ENCODE measurements at regions of chr4 and their contacts with region 1.

Region 1: GRCh38 chr4:169810325-169811323 is 52.9 kb upstream of the HPF1 start:
- DNase-seq: peak in 4 of 5 donors; percentile 46 to 56 (median 50)
- H3K4me3 ChIP-seq: no peak overlapping the region
- H3K4me3 Mint-ChIP-seq: no peak overlapping the region
- H3K27ac ChIP-seq: no peak overlapping the region
- H3K27ac Mint-ChIP-seq: no peak overlapping the region
- H3K4me1 ChIP-seq: no peaks in the 10 kb centered on the region
- H3K4me1 Mint-ChIP-seq: no peaks in the 10 kb centered on the region
- H3K27me3 ChIP-seq: no peaks in the 10 kb centered on the region
- H3K27me3 Mint-ChIP-seq: peaks cover 4 to 9% of the 10 kb centered on the region in 2 donors

Region 2: GRCh38 chr4:169698331-169698730 is 112.3 kb before region 1 on chr4:
- CTCF ChIA-PET with region 1: no interaction called
- POLR2A ChIA-PET with region 1: no interaction called
- intact Hi-C with region 1: no loop called
- DNase-seq: no peak
- H3K4me3 ChIP-seq: no peak overlapping the region
- H3K4me3 Mint-ChIP-seq: no peak overlapping the region
- H3K27ac ChIP-seq: no peak overlapping the region
- H3K27ac Mint-ChIP-seq: peak overlapping the region in 1 of 7 donors; percentile 25
- H3K4me1 ChIP-seq: no peaks in the 10 kb centered on the region
- H3K4me1 Mint-ChIP-seq: peaks cover 0 to 2% (median 0%) of the 10 kb centered on the region in 4 donors
- H3K27me3 ChIP-seq: no peaks in the 10 kb centered on the region
- H3K27me3 Mint-ChIP-seq: no peaks in the 10 kb centered on the region

Region 3: GRCh38 chr4:169800541-169800940 is 10.1 kb before region 1 on chr4:
- CTCF ChIA-PET with region 1: interaction called, 22 read pairs
- POLR2A ChIA-PET with region 1: no interaction called
- intact Hi-C with region 1: no loop called
- DNase-seq: no peak
- H3K4me3 ChIP-seq: no peak overlapping the region
- H3K4me3 Mint-ChIP-seq: no peak overlapping the region
- H3K27ac ChIP-seq: no peak overlapping the region
- H3K27ac Mint-ChIP-seq: no peak overlapping the region
- H3K4me1 ChIP-seq: no peaks in the 10 kb centered on the region
- H3K4me1 Mint-ChIP-seq: no peaks in the 10 kb centered on the region
- H3K27me3 ChIP-seq: no peaks in the 10 kb centered on the region
- H3K27me3 Mint-ChIP-seq: peaks cover 6 to 23% of the 10 kb centered on the region in 2 donors

Region 4: DNA sequence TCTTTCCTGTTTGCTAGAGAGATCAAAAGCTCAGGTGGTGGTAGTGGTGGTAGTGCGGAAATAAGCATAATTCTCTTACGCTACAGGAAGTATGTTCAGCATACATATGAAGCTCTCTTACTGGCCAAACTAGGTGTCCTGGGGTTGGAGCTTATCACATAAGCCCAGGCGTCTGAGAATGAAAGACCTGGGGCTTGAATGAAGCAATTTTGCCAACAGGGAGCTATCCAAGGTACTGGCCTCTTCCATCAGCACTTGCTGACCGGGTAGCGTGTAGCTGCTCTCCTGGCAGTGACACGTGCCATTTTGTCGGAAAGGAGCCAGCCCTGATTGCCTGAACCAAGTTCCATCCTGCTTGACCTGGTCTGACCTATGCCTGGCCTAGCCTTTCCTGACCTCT is 13.1 kb after region 1 on chr4:
- CTCF ChIA-PET with region 1: interaction called, 24 read pairs
- POLR2A ChIA-PET with region 1: no interaction called
- intact Hi-C with region 1: no loop called
- DNase-seq: peak in 4 of 5 donors; percentile 9 to 33 (median 20)
- H3K4me3 ChIP-seq: no peak overlapping the region
- H3K4me3 Mint-ChIP-seq: peak overlapping the region in 3 of 8 donors; percentile 25 to 63 (median 27)
- H3K27ac ChIP-seq: no peak overlapping the region
- H3K27ac Mint-ChIP-seq: peak overlapping the region in 1 of 7 donors; percentile 13
- H3K4me1 ChIP-seq: peaks cover 8% of the 10 kb centered on the region
- H3K4me1 Mint-ChIP-seq: peaks cover 3 to 9% (median 8%) of the 10 kb centered on the region in 4 donors
- H3K27me3 ChIP-seq: no peaks in the 10 kb centered on the region
- H3K27me3 Mint-ChIP-seq: peaks cover 4 to 5% of the 10 kb centered on the region in 2 donors

Region 5: GRCh38 chr4:169952236-169953002 is 141.8 kb after region 1 on chr4:
- CTCF ChIA-PET with region 1: no interaction called
- POLR2A ChIA-PET with region 1: no interaction called
- intact Hi-C with region 1: no loop called
- DNase-seq: no peak
- H3K4me3 ChIP-seq: no peak overlapping the region
- H3K4me3 Mint-ChIP-seq: no peak overlapping the region
- H3K27ac ChIP-seq: no peak overlapping the region
- H3K27ac Mint-ChIP-seq: no peak overlapping the region
- H3K4me1 ChIP-seq: no peaks in the 10 kb centered on the region
- H3K4me1 Mint-ChIP-seq: peaks cover 0 to 2% (median 0%) of the 10 kb centered on the region in 4 donors
- H3K27me3 ChIP-seq: no peaks in the 10 kb centered on the region
- H3K27me3 Mint-ChIP-seq: peaks cover 6 to 10% of the 10 kb centered on the region in 2 donors

Region 6: DNA sequence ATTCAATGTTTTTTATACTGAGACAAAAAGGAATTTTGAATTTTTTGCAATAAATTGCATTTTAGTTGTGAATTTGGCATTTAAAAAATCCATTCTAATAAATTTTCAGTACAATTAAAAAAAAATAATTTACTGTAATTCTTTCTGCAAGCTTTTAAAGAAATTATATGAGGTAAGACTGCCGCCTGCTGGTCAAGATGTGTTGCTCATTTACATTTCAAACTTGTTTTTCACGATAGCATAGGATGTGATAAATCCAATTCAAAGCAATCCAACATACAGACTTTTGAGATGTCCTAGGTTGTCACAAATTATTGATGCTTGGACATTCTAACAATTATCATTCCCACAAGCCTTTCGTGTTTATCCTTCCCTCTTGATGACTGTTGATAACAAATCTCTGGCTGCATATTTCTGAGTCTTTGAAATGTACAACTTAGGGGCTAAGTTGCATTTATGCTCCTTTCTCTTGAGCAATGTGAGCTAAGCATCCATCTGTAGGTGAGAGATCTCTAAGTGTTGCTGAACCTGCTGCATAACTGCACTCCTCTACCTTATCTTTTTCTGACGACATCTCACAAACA is 237.2 kb after region 1 on chr4:
- CTCF ChIA-PET with region 1: interaction called, 51 read pairs
- POLR2A ChIA-PET with region 1: no interaction called
- intact Hi-C with region 1: no loop called
- DNase-seq: peak; percentile 54 to 61 (median 56)
- H3K4me3 ChIP-seq: no peak overlapping the region
- H3K4me3 Mint-ChIP-seq: no peak overlapping the region
- H3K27ac ChIP-seq: no peak overlapping the region
- H3K27ac Mint-ChIP-seq: no peak overlapping the region
- H3K4me1 ChIP-seq: no peaks in the 10 kb centered on the region
- H3K4me1 Mint-ChIP-seq: no peaks in the 10 kb centered on the region
- H3K27me3 ChIP-seq: no peaks in the 10 kb centered on the region
- H3K27me3 Mint-ChIP-seq: peaks cover 2% of the 10 kb centered on the region in 2 donors

Measured in CD4-positive, alpha-beta memory T cell (primary cell).